B cell (primary cell): ENCODE measurements at regions of chrX and their contacts with region 1.

Region 1: GRCh38 chrX:37509349-37509748 is 62.1 kb upstream of the LANCL3 start:
- DNase-seq: peak; percentile 8
- ATAC-seq: no peak
- H3K4me3 ChIP-seq: no peak overlapping the region
- H3K4me3 Mint-ChIP-seq: no peak overlapping the region
- H3K27ac ChIP-seq: no peak overlapping the region
- H3K27ac Mint-ChIP-seq: no peak overlapping the region
- H3K4me1 ChIP-seq: no peaks in the 10 kb centered on the region
- H3K4me1 Mint-ChIP-seq: no peaks in the 10 kb centered on the region
- H3K27me3 ChIP-seq: peaks cover 0 to 3% (median 0%) of the 10 kb centered on the region in 4 experiments
- H3K27me3 Mint-ChIP-seq: peaks cover 7% of the 10 kb centered on the region
- CTCF ChIP-seq: peak; percentile 29

Region 2: DNA sequence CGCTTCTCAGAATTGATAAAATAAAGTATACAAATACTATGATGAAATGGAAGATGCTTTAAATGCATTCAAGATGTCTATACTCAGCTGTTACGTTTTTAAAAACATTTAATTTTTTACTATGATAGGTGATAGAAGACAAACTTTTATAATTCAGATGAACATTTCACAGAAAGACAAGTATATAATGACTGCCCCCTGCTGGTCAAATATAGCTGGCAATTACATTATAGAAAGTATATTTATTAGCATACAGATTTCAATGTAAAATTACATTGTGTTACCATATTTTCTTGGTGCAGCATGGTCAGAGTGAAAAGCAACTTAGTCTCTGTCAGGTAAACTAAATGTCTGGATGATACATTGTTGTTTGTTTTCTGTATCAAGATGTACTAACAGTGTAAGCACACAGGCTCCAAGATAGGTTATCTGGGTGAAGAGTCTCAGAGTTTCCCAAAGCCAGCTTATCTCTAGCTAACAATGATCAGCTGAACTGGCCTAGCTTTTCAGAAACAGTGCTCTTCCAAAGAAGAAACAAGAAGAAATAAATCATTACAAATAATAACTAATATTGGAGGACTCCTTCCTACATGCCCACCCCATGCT is 657.2 kb after region 1 on chrX:
- CTCF ChIA-PET with region 1: interaction called, 14 read pairs
- POLR2A ChIA-PET with region 1: no interaction called
- intact Hi-C with region 1: no loop called
- DNase-seq: peak; percentile 37
- ATAC-seq: no peak
- H3K4me3 ChIP-seq: no peak overlapping the region
- H3K4me3 Mint-ChIP-seq: no peak overlapping the region
- H3K27ac ChIP-seq: no peak overlapping the region
- H3K27ac Mint-ChIP-seq: no peak overlapping the region
- H3K4me1 ChIP-seq: no peaks in the 10 kb centered on the region
- H3K4me1 Mint-ChIP-seq: no peaks in the 10 kb centered on the region
- H3K27me3 ChIP-seq: no peaks in the 10 kb centered on the region
- H3K27me3 Mint-ChIP-seq: peaks cover 3% of the 10 kb centered on the region
- CTCF ChIP-seq: peak; percentile 65

Region 3: GRCh38 chrX:38654302-38654701 is 1145.0 kb after region 1 on chrX:
- CTCF ChIA-PET with region 1: no interaction called
- POLR2A ChIA-PET with region 1: no interaction called
- intact Hi-C with region 1: loop called (anchors 10 kb)
- DNase-seq: no peak
- ATAC-seq: no peak
- H3K4me3 ChIP-seq: no peak overlapping the region
- H3K4me3 Mint-ChIP-seq: no peak overlapping the region
- H3K27ac ChIP-seq: no peak overlapping the region
- H3K27ac Mint-ChIP-seq: no peak overlapping the region
- H3K4me1 ChIP-seq: no peaks in the 10 kb centered on the region
- H3K4me1 Mint-ChIP-seq: no peaks in the 10 kb centered on the region
- H3K27me3 ChIP-seq: no peaks in the 10 kb centered on the region
- H3K27me3 Mint-ChIP-seq: no peaks in the 10 kb centered on the region
- CTCF ChIP-seq: no peak